Activated naive CD4-positive, alpha-beta T cell treated with anti-CD3 and anti-CD28 coated beads, Interleukin-2, amount 10 ng/mL, durations not matched to agents 7 days and 5 days (primary cell): ENCODE measurements at regions of chr16 and their contacts with region 1.

Region 1: DNA sequence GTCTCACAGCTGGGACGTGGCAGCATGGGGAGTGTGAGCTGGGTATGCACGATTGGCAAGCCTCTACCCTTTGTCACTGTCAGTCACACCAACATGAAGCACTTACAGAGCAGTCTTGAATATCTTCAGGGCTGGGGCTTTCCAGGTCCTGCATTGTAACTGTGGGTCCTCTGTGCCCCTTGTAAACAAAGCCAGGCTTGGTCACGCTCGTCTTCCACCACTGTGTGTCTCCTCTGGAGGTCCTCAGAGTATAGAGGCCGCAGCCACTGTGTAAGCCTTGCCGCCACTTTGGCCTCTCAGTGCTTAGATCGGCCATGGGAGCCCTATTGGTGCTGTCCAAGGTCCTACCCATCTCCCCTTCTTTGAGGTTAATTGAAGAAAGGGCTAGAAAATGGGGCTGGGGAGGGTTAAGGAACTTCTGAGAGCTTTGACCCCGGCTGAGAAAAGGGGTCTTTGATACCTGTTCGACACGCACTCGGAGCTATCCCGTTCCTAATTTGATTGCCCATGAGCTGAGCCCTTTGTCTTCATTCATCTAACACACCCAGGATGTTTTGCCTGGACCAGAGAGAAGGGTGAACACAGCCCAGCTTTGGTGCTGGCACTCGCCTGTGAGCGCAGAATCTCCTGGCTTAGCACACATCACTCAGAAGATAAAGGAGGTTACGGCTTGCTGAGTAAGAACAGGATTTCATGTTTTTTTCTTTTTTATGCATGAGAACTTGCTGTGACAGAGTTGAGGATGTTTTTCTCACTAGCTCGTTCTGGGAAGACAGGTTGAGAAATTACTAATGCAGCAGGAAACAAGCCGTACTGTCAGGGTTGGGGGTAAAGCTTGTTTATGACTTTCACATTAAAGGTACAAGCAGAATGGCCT is 267.9 kb downstream of the CPPED1 start:
- DNase-seq: peak; percentile 67
- H3K4me3 Mint-ChIP-seq: peak overlapping the region; percentile 19
- H3K27ac Mint-ChIP-seq: peak overlapping the region; percentile 95
- H3K4me1 Mint-ChIP-seq: peaks cover 98% of the 10 kb centered on the region
- H3K27me3 Mint-ChIP-seq: no peaks in the 10 kb centered on the region

Region 2: GRCh38 chr16:12553191-12553590 is 17.4 kb after region 1 on chr16:
- CTCF ChIA-PET with region 1: interaction called, 10 read pairs
- DNase-seq: no peak
- H3K4me3 Mint-ChIP-seq: no peak overlapping the region
- H3K27ac Mint-ChIP-seq: no peak overlapping the region
- H3K4me1 Mint-ChIP-seq: peaks cover 55% of the 10 kb centered on the region
- H3K27me3 Mint-ChIP-seq: no peaks in the 10 kb centered on the region

Region 3: GRCh38 chr16:12573730-12574383 is 38.1 kb after region 1 on chr16:
- CTCF ChIA-PET with region 1: interaction called, 10 read pairs
- DNase-seq: peak; percentile 74
- H3K4me3 Mint-ChIP-seq: no peak overlapping the region
- H3K27ac Mint-ChIP-seq: no peak overlapping the region
- H3K4me1 Mint-ChIP-seq: peaks cover 19% of the 10 kb centered on the region
- H3K27me3 Mint-ChIP-seq: peaks cover 4% of the 10 kb centered on the region

Region 4: GRCh38 chr16:12587170-12587569 is 51.4 kb after region 1 on chr16:
- CTCF ChIA-PET with region 1: no interaction called
- DNase-seq: no peak
- H3K4me3 Mint-ChIP-seq: no peak overlapping the region
- H3K27ac Mint-ChIP-seq: no peak overlapping the region
- H3K4me1 Mint-ChIP-seq: peaks cover 10% of the 10 kb centered on the region
- H3K27me3 Mint-ChIP-seq: peaks cover 4% of the 10 kb centered on the region

Region 5: DNA sequence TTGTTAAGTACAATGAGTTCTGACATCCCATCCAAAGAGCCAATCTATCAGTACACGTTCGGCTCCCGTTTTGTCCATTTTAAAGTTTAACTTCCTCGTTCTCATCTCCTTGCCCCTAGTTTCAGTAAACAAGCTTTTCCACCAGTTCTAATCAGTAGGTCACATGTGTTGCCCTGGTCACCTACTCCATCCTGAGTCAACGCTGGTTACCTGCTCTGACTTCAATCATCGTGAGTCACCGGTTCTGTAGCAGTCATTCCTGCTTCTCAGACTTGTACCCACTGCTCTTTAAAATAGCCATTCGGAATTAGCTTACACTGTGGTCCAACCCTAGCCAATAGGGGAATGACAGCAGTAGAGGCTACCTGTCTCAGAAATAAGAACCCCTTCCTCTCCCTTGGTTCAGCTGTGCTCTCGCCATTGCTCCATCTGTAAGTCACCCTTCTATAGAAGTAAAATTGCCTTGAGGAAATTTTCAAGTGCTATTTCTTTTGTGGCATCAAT is 76.9 kb after region 1 on chr16:
- CTCF ChIA-PET with region 1: no interaction called
- DNase-seq: no peak
- H3K4me3 Mint-ChIP-seq: no peak overlapping the region
- H3K27ac Mint-ChIP-seq: no peak overlapping the region
- H3K4me1 Mint-ChIP-seq: peaks cover 8% of the 10 kb centered on the region
- H3K27me3 Mint-ChIP-seq: peaks cover 19% of the 10 kb centered on the region

Region 6: DNA sequence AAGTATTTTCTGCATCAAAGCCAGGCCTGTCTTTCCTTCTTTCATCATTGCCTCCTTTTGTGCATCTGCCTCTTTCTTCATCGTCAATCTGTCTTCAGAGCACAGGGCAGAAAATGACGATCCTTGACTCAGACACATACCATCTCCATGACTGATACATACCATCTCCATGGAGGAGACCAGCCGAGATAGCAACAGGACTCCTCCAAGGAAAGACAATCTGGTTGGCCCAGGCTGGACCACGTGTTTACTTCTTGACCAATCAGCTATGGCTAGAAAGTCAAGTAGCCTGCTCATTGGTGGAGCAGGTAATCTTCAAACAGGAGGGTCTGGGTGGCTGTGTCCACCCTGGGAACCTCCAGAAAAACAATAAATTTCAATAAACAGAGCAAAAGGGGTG is 103.3 kb after region 1 on chr16:
- CTCF ChIA-PET with region 1: no interaction called
- DNase-seq: no peak
- H3K4me3 Mint-ChIP-seq: no peak overlapping the region
- H3K27ac Mint-ChIP-seq: no peak overlapping the region
- H3K4me1 Mint-ChIP-seq: no peaks in the 10 kb centered on the region
- H3K27me3 Mint-ChIP-seq: peaks cover 7% of the 10 kb centered on the region